ENCODE measurements at regions of chr20 and their contacts with region 1.

Region 1: GRCh38 chr20:1212607-1213396 is 9.5 kb downstream of the C20orf202 start:
- DNase-seq: peak; percentile 72
- ATAC-seq: peak; percentile 92

Region 2: DNA sequence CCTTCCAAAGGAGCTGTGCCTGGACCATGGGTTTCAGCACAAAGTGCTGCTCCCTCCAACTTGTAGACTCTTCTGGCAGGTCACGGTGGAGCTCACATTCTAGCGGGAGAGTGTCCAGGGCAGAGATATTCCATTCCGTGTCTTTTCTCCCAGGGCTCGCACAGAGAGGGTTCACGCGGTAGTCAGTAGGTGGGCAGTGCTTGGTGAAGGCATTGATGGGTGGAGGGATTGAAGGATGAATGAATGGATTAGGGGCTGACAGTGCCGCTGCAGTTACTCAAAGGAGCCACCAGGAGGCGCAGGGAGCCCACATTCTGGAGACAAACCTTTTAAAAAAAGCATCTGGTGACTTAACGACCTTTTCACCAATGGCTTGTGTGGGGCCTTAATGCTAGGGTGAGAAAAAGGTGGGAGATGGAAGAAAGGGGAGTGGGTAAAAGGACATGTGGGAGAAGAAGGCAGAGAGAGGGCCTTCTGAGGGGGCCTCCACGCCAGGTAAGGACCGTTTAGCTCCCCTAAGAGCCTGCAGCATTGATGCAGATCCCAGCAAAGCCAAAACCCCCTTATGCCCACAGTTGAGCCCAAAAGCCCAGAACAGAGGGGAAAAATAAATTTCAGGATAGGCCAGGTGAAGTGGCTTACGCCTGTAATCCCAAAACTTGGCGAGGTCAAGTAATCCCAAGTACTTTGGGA is 396.7 kb before region 1 on chr20:
- intact Hi-C with region 1: loop called (anchors 5 kb)
- DNase-seq: peak; percentile 73
- ATAC-seq: peak; percentile 61

Region 3: DNA sequence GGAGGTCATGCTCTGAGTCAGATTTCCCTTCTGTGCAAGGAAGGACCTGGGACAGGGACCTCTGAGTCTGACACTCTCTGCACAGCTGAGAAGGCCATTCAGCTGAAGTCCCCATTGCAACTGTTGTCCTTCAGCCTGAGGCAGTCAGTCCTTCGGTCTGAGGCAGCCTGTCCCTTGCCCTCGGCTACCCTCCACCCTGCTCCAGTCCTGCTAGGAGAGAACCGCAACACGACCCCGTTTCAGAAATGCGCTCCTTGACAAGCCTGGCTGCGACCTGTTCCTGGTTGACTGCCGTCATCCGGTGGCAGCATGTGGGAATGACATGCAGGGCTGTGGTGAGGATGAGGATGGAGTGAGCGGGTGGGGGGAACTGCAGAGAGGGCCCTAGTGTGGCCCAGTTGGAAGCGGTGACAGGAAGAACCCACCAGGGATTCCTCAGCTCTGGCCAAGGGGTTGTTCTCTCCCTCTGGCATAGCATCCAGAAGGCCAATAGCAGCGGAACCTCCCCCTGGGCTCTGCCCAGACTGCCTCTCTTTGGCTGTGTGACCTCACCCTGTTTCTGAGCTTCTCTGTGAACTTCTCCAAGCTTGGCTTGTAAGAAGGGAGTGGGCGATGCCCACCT is 256.4 kb before region 1 on chr20:
- intact Hi-C with region 1: loop called (anchors 10 kb)
- DNase-seq: peak; percentile 81
- ATAC-seq: peak; percentile 93

Region 4: DNA sequence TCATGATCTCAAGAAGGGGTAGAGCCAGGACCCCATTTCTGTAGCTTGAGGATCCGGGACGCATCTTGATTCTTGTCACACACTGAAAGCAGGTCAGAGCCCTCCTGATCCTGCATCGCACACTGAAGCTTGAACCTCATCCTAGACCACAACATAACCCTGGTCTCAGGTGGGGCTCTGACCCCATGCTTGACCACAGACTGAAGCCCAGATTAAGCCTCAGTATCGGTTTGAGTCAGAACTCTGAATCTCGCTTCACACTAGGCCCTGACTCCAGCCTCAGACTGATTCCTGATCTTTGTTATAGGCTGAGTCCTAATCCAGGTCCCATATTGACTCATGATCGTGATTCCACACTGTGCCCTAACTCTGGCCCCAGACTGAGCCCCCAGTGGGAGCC is 202.1 kb before region 1 on chr20:
- intact Hi-C with region 1: no loop called
- DNase-seq: no peak
- ATAC-seq: no peak

Region 5: DNA sequence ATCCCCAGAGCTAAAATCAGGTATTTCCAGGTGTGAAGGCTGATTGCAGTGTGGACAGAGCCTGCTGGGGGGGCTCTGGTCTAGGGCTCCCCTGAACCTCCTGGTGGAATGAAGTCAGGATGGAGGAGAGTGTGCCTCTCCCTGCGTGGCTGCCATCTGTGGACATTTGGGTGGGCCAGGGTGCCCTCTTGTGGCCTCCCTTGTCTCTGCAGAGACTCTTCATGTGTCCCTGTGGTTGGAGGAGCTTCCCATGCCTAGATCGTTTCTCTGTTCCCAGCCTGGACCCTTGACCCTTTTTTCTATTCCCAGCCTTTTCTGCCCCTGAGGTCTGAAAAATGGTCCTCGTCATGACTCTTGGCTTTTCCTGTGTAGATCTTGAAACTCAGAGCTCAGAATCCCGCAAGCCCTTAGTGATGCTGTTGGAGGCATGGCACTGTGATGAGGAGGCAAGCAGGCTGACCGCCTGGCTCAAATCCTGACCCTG is 104.3 kb before region 1 on chr20:
- intact Hi-C with region 1: loop called (anchors 10 kb)
- DNase-seq: peak; percentile 68
- ATAC-seq: peak; percentile 76

Measured in Right ventricle myocardium superior (tissue), 1 donor.